ENCODE measurements at regions of chr14 and their contacts with region 1.

Region 1: DNA sequence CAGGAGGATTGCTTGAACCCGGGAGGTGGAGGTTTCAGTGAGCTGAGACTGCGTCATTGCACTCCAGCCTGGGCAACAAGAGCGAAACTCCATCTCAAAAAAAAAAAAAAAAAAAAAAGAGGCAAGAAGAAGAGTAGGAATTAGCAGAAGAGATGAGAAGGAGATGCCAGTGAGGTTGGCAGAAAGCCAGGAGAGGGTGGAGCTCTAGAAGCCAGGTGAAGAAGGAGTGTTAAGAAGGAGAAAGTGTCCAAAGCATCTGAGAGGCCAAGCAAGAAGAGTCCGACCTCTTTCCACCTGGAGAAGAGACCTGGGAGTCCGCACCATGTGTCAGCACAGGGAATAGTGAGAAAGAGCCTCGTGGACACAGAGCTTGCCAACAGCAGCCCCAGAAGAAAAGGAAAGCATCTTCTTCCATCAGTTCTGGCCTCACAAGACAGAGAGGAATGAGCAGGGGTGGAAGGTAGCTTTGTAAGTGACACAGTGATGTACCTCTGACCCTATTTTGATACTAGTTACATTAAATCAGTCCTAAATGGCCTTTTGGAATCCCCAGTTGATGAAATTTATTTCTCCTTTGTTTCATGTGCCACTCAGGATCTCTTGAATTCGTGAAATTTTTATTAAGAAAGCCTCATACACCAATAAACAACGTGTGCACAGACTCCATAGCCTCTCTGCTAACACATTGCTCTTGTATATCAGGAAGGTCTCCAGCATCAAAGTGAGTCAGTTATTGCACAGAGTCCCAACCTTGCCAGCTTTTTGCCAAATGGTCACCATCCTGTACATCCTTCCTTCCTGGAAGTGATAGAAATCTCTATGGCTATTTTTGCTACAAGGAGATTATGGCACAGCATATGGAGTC is 70.6 kb downstream of the SAMD4A start:
- DNase-seq: no peak
- ATAC-seq: no peak
- H3K4me3 ChIP-seq: no peak overlapping the region
- H3K4me3 Mint-ChIP-seq: no peak overlapping the region
- H3K27ac ChIP-seq: no peak overlapping the region
- H3K27ac Mint-ChIP-seq: no peak overlapping the region
- H3K4me1 ChIP-seq: no peaks in the 10 kb centered on the region
- H3K4me1 Mint-ChIP-seq: peaks cover 0 to 3% (median 0%) of the 10 kb centered on the region in 7 donors
- H3K27me3 ChIP-seq: no peaks in the 10 kb centered on the region
- H3K27me3 Mint-ChIP-seq: peaks cover 0 to 10% (median 3%) of the 10 kb centered on the region in 5 donors

Region 2: GRCh38 chr14:54593860-54594259 is 43.6 kb before region 1 on chr14:
- CTCF ChIA-PET with region 1: no interaction called
- POLR2A ChIA-PET with region 1: no interaction called
- intact Hi-C with region 1: no loop called
- DNase-seq: no peak
- ATAC-seq: no peak
- H3K4me3 ChIP-seq: no peak overlapping the region
- H3K4me3 Mint-ChIP-seq: no peak overlapping the region
- H3K27ac ChIP-seq: no peak overlapping the region
- H3K27ac Mint-ChIP-seq: no peak overlapping the region
- H3K4me1 ChIP-seq: no peaks in the 10 kb centered on the region
- H3K4me1 Mint-ChIP-seq: peaks cover 0 to 8% (median 0%) of the 10 kb centered on the region in 7 donors
- H3K27me3 ChIP-seq: peaks cover 0 to 5% of the 10 kb centered on the region in 2 donors
- H3K27me3 Mint-ChIP-seq: peaks cover 5 to 39% (median 16%) of the 10 kb centered on the region in 5 donors

Region 3: DNA sequence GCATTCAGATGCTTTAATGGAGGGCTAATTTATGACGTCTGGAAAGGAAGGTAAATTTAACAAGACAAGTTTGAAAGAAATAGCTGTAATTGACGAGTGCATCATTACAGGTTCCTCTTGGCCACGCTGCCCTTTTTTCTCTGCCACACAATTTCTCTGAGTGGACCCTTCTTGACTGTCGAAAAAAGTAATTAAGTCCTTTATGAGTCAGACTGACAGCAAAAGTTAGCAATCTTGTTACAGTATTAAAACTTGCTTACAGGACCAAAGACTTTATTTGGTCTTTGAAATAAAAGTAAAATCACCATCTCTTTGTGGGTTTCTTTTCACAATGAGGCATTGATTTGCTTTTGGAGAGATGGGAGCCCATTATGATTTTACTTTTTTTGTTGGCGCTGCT is 27.9 kb before region 1 on chr14:
- CTCF ChIA-PET with region 1: no interaction called
- POLR2A ChIA-PET with region 1: no interaction called
- intact Hi-C with region 1: loop called in 1 of 2 experiments (anchors 1 kb)
- DNase-seq: no peak
- ATAC-seq: no peak
- H3K4me3 ChIP-seq: no peak overlapping the region
- H3K4me3 Mint-ChIP-seq: no peak overlapping the region
- H3K27ac ChIP-seq: no peak overlapping the region
- H3K27ac Mint-ChIP-seq: no peak overlapping the region
- H3K4me1 ChIP-seq: no peaks in the 10 kb centered on the region
- H3K4me1 Mint-ChIP-seq: peaks cover 0 to 1% (median 0%) of the 10 kb centered on the region in 7 donors
- H3K27me3 ChIP-seq: no peaks in the 10 kb centered on the region
- H3K27me3 Mint-ChIP-seq: peaks cover 0 to 9% (median 7%) of the 10 kb centered on the region in 5 donors

Region 4: DNA sequence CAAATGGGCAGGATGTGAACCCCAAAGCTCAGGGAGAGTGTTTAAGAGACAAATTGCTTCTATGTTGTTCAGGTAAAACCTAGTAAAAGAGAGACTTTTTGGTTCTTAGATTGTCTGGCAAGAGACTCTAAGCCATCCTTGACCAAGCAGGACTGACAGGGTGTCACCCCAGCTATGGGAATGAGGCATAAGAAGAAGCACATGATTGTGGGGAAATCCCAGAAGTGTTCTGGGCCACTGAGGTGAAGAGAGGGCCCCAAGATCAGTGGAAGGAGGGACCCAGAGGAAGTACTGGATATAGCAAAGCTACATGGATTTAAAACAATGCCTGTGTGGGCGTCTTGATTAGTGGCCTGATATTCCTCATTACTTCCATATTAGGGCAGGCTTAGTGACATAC is 28.4 kb after region 1 on chr14:
- CTCF ChIA-PET with region 1: no interaction called
- POLR2A ChIA-PET with region 1: no interaction called
- intact Hi-C with region 1: no loop called
- DNase-seq: no peak
- ATAC-seq: no peak
- H3K4me3 ChIP-seq: no peak overlapping the region
- H3K4me3 Mint-ChIP-seq: no peak overlapping the region
- H3K27ac ChIP-seq: no peak overlapping the region
- H3K27ac Mint-ChIP-seq: no peak overlapping the region
- H3K4me1 ChIP-seq: peaks cover 0 to 15% of the 10 kb centered on the region in 2 donors
- H3K4me1 Mint-ChIP-seq: peaks cover 0 to 17% (median 4%) of the 10 kb centered on the region in 7 donors
- H3K27me3 ChIP-seq: no peaks in the 10 kb centered on the region
- H3K27me3 Mint-ChIP-seq: peaks cover 0 to 46% (median 9%) of the 10 kb centered on the region in 5 donors